Right lobe of liver (tissue), 6 donors: ENCODE measurements at regions of chr10 and their contacts with region 1.

Region 1: GRCh38 chr10:110746254-110746826 is 102.2 kb downstream of the RBM20 start:
- DNase-seq: peak in 2 of 3 donors; percentile 46 to 65
- ATAC-seq: peak; percentile 93 to 98 (median 96)
- H3K4me3 ChIP-seq: no peak overlapping the region
- H3K27ac ChIP-seq: no peak overlapping the region
- H3K4me1 ChIP-seq: no peaks in the 10 kb centered on the region
- H3K27me3 ChIP-seq: no peaks in the 10 kb centered on the region
- CTCF ChIP-seq: peak; percentile 78 to 86 (median 82)
- POLR2A ChIP-seq: no peak

Region 2: GRCh38 chr10:110901954-110902819 is 155.8 kb after region 1 on chr10:
- intact Hi-C with region 1: loop called in 1 of 2 experiments (anchors 10 kb)
- DNase-seq: no peak
- ATAC-seq: peak in 2 of 4 donors; percentile 72 to 81
- H3K4me3 ChIP-seq: no peak overlapping the region
- H3K27ac ChIP-seq: no peak overlapping the region
- H3K4me1 ChIP-seq: peaks cover 0 to 4% (median 0%) of the 10 kb centered on the region in 4 donors
- H3K27me3 ChIP-seq: no peaks in the 10 kb centered on the region
- CTCF ChIP-seq: no peak
- POLR2A ChIP-seq: no peak